ENCODE measurements at regions of chr6 and their contacts with region 1.

Region 1: DNA sequence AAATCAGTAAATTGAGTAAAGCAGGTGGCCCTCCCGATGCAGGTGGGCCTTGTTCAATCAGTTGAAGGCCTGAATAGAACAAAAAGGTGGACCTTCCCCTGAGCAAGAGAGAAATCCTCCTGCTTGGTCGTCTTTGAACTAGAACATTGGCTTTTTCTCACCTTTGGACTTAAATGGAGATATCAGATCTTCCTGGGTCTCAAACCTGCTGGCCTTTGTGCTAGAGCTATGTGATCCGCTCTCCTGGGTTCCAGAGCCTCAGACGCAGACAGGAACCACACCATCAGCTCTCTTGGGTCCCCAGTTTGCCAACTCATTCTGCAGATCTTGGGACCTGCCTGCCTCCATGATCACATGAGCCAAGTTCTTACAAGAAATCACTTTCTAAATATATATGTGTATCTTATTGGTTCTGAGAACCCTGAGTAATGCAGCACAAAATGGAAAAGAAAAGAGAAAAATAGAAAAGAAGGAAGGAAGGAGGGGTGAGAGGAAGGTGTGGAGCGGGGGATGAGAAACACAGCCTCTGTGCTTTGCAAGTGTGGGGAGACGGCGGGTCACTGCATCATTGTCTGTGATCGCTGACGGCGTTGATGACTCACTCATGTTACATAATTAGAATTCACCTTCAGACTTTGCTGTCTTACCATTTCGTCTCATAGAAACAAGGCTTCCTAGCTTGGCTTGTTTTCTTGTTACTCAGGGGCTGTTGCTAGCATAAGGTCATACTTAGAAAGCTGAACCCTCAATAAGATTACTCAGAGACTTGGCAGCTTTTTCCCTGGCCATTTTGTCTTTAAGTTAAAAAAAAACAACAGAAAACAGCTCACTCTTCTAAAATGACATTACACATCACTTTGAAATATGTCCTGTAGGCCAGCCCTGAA is 85.7 kb upstream of the NEDD9 start:
- DNase-seq: peak; percentile 99
- H3K4me3 ChIP-seq: no peak overlapping the region
- H3K27ac ChIP-seq: peak overlapping the region; percentile 100
- H3K4me1 ChIP-seq: peaks cover 37% of the 10 kb centered on the region
- H3K27me3 ChIP-seq: no peaks in the 10 kb centered on the region
- CTCF ChIP-seq: no peak
- POLR2A ChIP-seq: no peak

Region 2: DNA sequence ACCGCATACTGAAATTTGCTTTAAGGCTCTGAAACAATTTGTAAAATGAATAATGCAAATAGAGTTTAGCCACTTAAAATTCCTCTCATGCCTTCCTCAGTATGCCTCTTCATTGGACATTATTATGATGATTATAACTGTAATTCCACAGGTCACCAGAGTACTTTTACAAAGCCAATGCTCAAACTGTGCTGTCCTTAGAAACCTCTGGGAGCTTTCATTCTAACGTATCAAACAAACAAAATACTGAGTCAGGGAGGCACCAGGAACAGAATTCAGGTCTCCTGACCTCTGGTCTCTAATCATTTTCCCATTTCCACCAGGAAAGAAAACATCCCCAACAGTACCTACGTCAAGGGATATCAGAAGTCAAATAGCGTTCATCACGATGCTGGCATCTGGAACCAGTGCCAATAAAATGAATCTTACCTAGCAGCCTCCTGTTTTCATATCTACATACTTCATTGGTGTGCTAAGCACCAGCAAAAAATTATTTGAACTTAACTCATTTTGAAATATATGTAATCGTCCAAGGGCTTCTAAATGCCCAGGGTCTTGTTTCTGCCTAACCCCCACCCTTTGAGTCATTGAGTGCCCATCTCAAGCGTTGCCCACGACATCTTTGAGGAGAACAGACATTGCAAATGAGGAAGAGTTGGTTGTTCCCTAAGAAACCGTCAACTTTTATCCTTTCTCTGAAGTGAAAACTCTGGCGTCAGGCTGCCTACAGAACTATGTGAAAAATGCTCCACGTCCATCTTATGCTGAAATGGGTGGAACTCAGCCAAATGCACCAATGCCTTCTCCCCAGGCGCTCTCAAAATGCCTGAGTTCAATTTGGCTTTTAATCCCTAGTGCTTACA is 123.5 kb before region 1 on chr6:
- CTCF ChIA-PET with region 1: interaction called, 3 read pairs
- POLR2A ChIA-PET with region 1: no interaction called
- dilution Hi-C with region 1: no loop called
- intact Hi-C with region 1: loop called (anchors 1 kb)
- DNase-seq: peak; percentile 91
- H3K4me3 ChIP-seq: peak overlapping the region in 1 of 3 experiments; percentile 9
- H3K27ac ChIP-seq: peak overlapping the region; percentile 98
- H3K4me1 ChIP-seq: peaks cover 37% of the 10 kb centered on the region
- H3K27me3 ChIP-seq: no peaks in the 10 kb centered on the region
- CTCF ChIP-seq: peak in 1 of 2 donors; percentile 9
- POLR2A ChIP-seq: peak; percentile 38

Region 3: DNA sequence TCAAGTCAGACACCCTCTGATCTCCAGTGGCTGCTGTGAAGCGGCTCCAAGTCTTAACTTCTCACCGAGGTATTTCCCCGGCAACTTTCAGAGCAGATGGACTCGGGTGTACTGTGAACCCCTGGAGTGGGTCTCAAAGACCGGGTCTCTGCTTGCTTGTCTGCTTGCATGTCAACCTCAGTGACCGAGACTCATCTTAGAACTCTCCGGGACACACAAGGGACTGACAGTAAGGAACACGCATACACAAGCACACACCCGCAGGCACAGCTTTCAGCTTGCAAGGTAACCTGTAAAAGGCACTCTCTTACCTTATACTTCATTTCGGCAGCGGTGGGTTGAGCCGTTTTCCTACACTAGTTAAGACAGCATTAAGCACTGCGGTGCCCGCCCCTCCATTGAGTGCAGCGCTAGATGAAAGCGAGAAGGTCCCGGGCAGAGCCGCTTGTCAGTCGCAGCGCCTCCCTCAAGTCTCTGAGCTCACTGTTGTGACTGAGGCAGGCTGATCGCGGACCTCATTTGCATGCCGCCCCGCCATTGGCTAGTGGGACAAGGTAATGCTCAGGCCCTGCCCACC is 85.8 kb before region 1 on chr6 and contains the start of gene NEDD9:
- CTCF ChIA-PET with region 1: interaction called, 3 read pairs
- POLR2A ChIA-PET with region 1: interaction called, 9 read pairs
- dilution Hi-C with region 1: no loop called
- intact Hi-C with region 1: loop called (anchors 1 kb)
- DNase-seq: peak; percentile 98
- H3K4me3 ChIP-seq: peak within 1 kb of the TSS; percentile 69 to 93 (median 70)
- H3K27ac ChIP-seq: peak within 1 kb of the TSS; percentile 93
- H3K4me1 ChIP-seq: peaks cover 36% of the 10 kb centered on the region
- H3K27me3 ChIP-seq: no peaks in the 10 kb centered on the region
- CTCF ChIP-seq: no peak
- POLR2A ChIP-seq: peak; percentile 98
- total RNA-seq, gene NEDD9: 55.2 and 73.0 TPM in 2 replicates

Region 4: GRCh38 chr6:11298651-11299420 is 19.3 kb before region 1 on chr6:
- CTCF ChIA-PET with region 1: no interaction called
- POLR2A ChIA-PET with region 1: no interaction called
- dilution Hi-C with region 1: no loop called
- intact Hi-C with region 1: loop called (anchors 1 kb)
- DNase-seq: peak; percentile 39
- H3K4me3 ChIP-seq: no peak overlapping the region
- H3K27ac ChIP-seq: peak overlapping the region; percentile 2
- H3K4me1 ChIP-seq: peaks cover 9% of the 10 kb centered on the region
- H3K27me3 ChIP-seq: no peaks in the 10 kb centered on the region
- CTCF ChIP-seq: no peak
- POLR2A ChIP-seq: no peak

Region 5: GRCh38 chr6:11414176-11414963 is 96.2 kb after region 1 on chr6:
- CTCF ChIA-PET with region 1: interaction called, 3 read pairs
- POLR2A ChIA-PET with region 1: no interaction called
- dilution Hi-C with region 1: no loop called
- intact Hi-C with region 1: loop called (anchors 1 kb)
- DNase-seq: peak; percentile 43
- H3K4me3 ChIP-seq: no peak overlapping the region
- H3K27ac ChIP-seq: no peak overlapping the region
- H3K4me1 ChIP-seq: peaks cover 35% of the 10 kb centered on the region
- H3K27me3 ChIP-seq: no peaks in the 10 kb centered on the region
- CTCF ChIP-seq: no peak
- POLR2A ChIP-seq: no peak

Region 6: DNA sequence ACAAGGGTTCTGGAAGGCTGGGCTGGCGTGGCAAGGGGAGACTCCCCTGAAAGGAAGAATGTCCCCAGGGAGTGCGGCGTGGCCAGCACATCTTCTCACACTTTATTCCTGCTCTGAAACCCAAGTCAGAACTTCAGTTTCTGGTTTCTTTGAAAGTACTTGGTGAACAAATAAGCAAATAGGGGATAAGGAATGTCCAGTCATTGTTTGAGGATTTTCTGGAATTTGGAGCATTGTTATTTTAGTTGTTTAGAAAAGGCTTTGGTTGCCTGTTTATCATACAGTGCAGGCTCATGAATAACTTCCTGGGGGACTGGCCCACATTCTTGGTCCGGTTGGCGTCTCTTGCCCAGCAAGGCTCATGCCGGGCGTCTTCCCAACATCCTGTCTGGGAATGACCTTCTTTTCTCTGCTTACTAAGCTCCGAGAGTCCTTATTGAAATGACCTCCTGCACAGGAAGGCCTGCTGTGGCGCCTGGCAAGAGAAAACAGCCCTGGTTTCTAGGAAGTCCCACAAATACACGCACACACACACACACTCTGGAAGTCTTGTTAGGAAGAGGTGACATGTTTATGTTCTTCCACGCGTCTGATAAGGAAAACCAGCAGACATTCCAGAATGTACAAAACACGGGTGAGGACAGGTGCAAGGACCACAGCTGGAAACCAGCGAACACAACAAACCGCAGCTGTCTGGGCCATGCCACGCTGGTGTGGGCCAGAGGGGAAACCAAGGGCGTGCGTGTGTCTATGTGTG is 291.4 kb after region 1 on chr6:
- CTCF ChIA-PET with region 1: no interaction called
- POLR2A ChIA-PET with region 1: no interaction called
- dilution Hi-C with region 1: no loop called
- intact Hi-C with region 1: loop called (anchors 2 kb)
- DNase-seq: peak; percentile 99
- H3K4me3 ChIP-seq: peak overlapping the region in 2 of 3 experiments; percentile 30 to 86
- H3K27ac ChIP-seq: peak overlapping the region; percentile 99
- H3K4me1 ChIP-seq: peaks cover 78% of the 10 kb centered on the region
- H3K27me3 ChIP-seq: no peaks in the 10 kb centered on the region
- CTCF ChIP-seq: no peak
- POLR2A ChIP-seq: no peak

Region 7: GRCh38 chr6:11785774-11786579 is 467.8 kb after region 1 on chr6:
- CTCF ChIA-PET with region 1: no interaction called
- POLR2A ChIA-PET with region 1: no interaction called
- dilution Hi-C with region 1: no loop called
- intact Hi-C with region 1: no loop called
- DNase-seq: no peak
- H3K4me3 ChIP-seq: no peak overlapping the region
- H3K27ac ChIP-seq: no peak overlapping the region
- H3K4me1 ChIP-seq: no peaks in the 10 kb centered on the region
- H3K27me3 ChIP-seq: peaks cover 2 to 3% of the 10 kb centered on the region in 2 experiments
- CTCF ChIP-seq: no peak
- POLR2A ChIP-seq: no peak

Measured in endothelial cell of umbilical vein (primary cell).